Testis (tissue), 5 donors: ENCODE measurements at regions of chr17 and their contacts with region 1.

Region 1: GRCh38 chr17:44533533-44534246 is 23.6 kb upstream of the FZD2 start:
- DNase-seq: peak; percentile 96
- H3K4me3 ChIP-seq: no peak overlapping the region
- H3K27ac ChIP-seq: no peak overlapping the region
- H3K4me1 ChIP-seq: peaks cover 15% of the 10 kb centered on the region
- H3K27me3 ChIP-seq: no peaks in the 10 kb centered on the region
- CTCF ChIP-seq: peak; percentile 92 to 98 (median 96)
- POLR2A ChIP-seq: no peak

Region 2: GRCh38 chr17:44636562-44636961 is 102.9 kb after region 1 on chr17:
- intact Hi-C with region 1: loop called (anchors 5 kb)
- DNase-seq: no peak
- H3K4me3 ChIP-seq: no peak overlapping the region
- H3K27ac ChIP-seq: no peak overlapping the region
- H3K4me1 ChIP-seq: no peaks in the 10 kb centered on the region
- H3K27me3 ChIP-seq: no peaks in the 10 kb centered on the region
- CTCF ChIP-seq: peak in 1 of 3 experiments; percentile 19
- POLR2A ChIP-seq: no peak